HepG2 (cell line): ENCODE measurements at regions of chr2 and their contacts with region 1.

Region 1: GRCh38 chr2:227347117-227347516 is 22.1 kb downstream of the MFF start:
- DNase-seq: no peak
- ATAC-seq: peak; percentile 50; the same call in 2 of the 3 replicates
- H3K4me3 ChIP-seq: no peak overlapping the region
- H3K27ac ChIP-seq: no peak overlapping the region
- H3K4me1 ChIP-seq: no peaks in the 10 kb centered on the region
- H3K27me3 ChIP-seq: no peaks in the 10 kb centered on the region
- CTCF ChIP-seq: no peak
- EP300 ChIP-seq: no peak
- POLR2A ChIP-seq: no peak
- RAD21 ChIP-seq: no peak

Region 2: DNA sequence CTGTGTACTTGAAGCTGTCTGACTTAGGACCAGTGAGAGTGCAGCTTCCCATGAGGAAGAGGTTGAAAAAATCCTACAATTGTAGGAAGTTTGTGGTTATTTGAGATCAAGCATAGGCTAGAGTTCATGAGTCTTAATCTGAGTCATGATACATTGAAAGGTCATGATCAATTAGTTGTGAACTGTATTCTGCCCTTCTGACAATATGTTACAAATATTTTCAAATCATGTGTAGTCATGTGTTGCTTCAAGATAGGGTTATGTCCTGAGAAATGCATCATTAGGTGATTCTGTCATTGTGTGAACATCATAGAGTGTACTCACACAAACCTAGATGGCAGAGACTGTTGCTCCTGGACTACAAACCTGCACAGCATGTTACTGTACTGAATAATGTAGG is 90.5 kb before region 1 on chr2:
- CTCF ChIA-PET with region 1: no interaction called
- POLR2A ChIA-PET with region 1: no interaction called
- in situ Hi-C with region 1: no loop called
- intact Hi-C with region 1: no loop called
- DNase-seq: no peak
- ATAC-seq: no peak
- H3K4me3 ChIP-seq: no peak overlapping the region
- H3K27ac ChIP-seq: no peak overlapping the region
- H3K4me1 ChIP-seq: no peaks in the 10 kb centered on the region
- H3K27me3 ChIP-seq: no peaks in the 10 kb centered on the region
- CTCF ChIP-seq: no peak
- EP300 ChIP-seq: no peak
- POLR2A ChIP-seq: no peak
- RAD21 ChIP-seq: no peak

Region 3: DNA sequence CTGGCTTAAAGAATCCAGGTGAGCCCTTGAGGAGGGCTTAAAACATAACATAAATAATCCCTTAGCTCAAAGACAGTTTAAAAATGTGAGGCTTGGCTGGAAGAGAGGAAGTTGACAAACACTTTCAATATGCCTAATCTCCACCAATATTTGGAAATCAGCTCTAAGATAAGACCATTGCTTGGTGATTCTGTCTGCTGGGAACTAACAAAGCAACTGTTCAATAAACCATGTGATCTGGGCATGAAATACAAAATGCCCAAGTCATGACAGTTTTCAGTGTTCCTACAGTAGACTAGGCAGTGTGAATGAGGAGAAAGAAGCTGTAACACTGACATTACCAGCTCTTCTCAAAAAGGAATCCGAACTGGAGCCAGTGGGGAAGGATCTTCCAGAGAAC is 11.4 kb before region 1 on chr2:
- CTCF ChIA-PET with region 1: no interaction called
- POLR2A ChIA-PET with region 1: interaction called, 11 read pairs
- in situ Hi-C with region 1: no loop called
- intact Hi-C with region 1: no loop called
- DNase-seq: no peak
- ATAC-seq: no peak
- H3K4me3 ChIP-seq: no peak overlapping the region
- H3K27ac ChIP-seq: no peak overlapping the region
- H3K4me1 ChIP-seq: peaks cover 31% of the 10 kb centered on the region
- H3K27me3 ChIP-seq: no peaks in the 10 kb centered on the region
- CTCF ChIP-seq: no peak
- EP300 ChIP-seq: no peak
- POLR2A ChIP-seq: no peak
- RAD21 ChIP-seq: no peak